ENCODE measurements at regions of chr1 and their contacts with region 1.

Region 1: GRCh38 chr1:147273409-147274336 is 31.2 kb downstream of the CHD1L start:
- DNase-seq: no peak
- ATAC-seq: peak; percentile 86
- H3K4me3 ChIP-seq: no peak overlapping the region
- H3K27ac ChIP-seq: no peak overlapping the region
- H3K4me1 ChIP-seq: no peaks in the 10 kb centered on the region
- H3K27me3 ChIP-seq: no peaks in the 10 kb centered on the region

Region 2: DNA sequence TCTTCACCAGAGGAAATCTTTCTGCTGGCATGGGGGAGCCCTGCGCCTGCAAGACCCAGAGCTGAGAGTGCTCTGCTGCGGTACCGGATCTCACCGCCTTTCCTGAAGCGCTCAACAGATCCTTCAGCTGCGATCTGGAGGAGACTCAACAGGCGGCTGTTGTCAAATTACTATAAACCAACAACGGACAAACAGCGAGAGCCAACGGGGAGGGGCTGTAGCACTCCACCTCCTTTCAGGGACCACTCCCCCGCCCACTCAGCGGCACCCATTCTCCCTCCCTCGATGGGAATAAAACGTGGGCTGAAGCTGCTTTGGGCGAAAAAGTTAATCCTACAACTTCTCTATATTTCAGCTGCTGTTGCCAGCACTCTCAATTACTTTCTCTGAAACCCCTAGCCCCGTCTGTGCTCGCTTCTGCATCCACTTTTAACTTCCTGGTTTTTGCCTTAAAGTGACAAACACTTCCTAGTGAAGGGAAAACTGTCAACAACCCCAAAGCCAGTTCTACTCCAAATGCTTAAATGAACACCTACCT is 48.4 kb before region 1 on chr1 and contains the start of gene FMO5:
- intact Hi-C with region 1: no loop called
- DNase-seq: peak; percentile 81 to 87
- ATAC-seq: peak; percentile 86
- H3K4me3 ChIP-seq: peak within 1 kb of the TSS; percentile 95 to 98
- H3K27ac ChIP-seq: peak within 1 kb of the TSS in 1 of 2 donors; percentile 42
- H3K4me1 ChIP-seq: no peaks in the 10 kb centered on the region
- H3K27me3 ChIP-seq: no peaks in the 10 kb centered on the region
- total RNA-seq, gene FMO5: 2.9 to 5.8 TPM

Region 3: GRCh38 chr1:147316968-147317367 is 43.3 kb after region 1 on chr1:
- intact Hi-C with region 1: no loop called
- DNase-seq: no peak
- ATAC-seq: no peak
- H3K4me3 ChIP-seq: no peak overlapping the region
- H3K27ac ChIP-seq: no peak overlapping the region
- H3K4me1 ChIP-seq: no peaks in the 10 kb centered on the region
- H3K27me3 ChIP-seq: no peaks in the 10 kb centered on the region

Region 4: GRCh38 chr1:147389532-147390524 is 116.2 kb after region 1 on chr1:
- intact Hi-C with region 1: loop called (anchors 2 to 5 kb)
- DNase-seq: no peak
- ATAC-seq: peak; percentile 52
- H3K4me3 ChIP-seq: no peak overlapping the region
- H3K27ac ChIP-seq: no peak overlapping the region
- H3K4me1 ChIP-seq: no peaks in the 10 kb centered on the region
- H3K27me3 ChIP-seq: no peaks in the 10 kb centered on the region

Region 5: DNA sequence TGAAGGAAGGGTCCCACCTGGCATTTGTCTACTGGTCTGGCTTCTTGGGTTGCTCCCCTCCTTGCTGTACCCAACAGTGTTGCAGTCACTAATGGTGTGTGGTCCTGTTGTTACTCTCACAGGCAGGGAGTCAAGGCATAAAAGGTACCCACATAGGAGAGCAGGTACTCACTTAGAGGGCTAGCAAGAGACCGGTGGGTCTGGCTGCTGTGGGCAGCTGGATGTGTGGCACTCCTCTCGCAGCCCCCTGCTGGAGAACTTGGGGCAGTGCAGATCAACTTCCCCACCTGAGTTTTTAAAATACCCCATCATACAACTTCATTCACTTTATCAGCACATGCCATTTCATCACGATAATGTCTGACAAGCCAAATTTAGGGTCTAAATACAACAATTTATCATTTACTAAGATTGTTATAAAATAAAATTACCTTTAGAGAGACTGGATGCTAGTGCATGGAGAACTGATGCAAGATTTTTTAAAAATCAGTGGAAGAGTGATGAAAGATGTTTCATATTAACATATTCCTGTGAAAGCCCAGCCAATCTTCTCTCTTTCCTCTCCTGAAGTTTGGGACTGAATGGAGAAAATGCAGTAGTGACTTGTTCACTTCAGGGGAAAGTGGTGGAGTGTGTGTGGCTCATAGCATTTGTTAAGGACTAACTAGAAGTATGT is 353.9 kb after region 1 on chr1:
- intact Hi-C with region 1: loop called in 1 of 2 experiments (anchors 10 kb)
- DNase-seq: peak in 1 of 2 donors; percentile 81
- ATAC-seq: peak; percentile 83
- H3K4me3 ChIP-seq: no peak overlapping the region
- H3K27ac ChIP-seq: no peak overlapping the region
- H3K4me1 ChIP-seq: no peaks in the 10 kb centered on the region
- H3K27me3 ChIP-seq: no peaks in the 10 kb centered on the region